ENCODE measurements at regions of chr4 and their contacts with region 1.

Region 1: GRCh38 chr4:89294573-89295269 is 12.9 kb downstream of the GPRIN3 start:
- DNase-seq: peak in 2 of 5 donors; percentile 80 to 81
- H3K4me3 ChIP-seq: peak overlapping the region; percentile 3
- H3K4me3 Mint-ChIP-seq: peak overlapping the region; percentile 73 to 87 (median 82)
- H3K27ac ChIP-seq: peak overlapping the region; percentile 43
- H3K27ac Mint-ChIP-seq: peak overlapping the region; percentile 86 to 99 (median 94)
- H3K4me1 ChIP-seq: peaks cover 89% of the 10 kb centered on the region
- H3K4me1 Mint-ChIP-seq: peaks cover 74 to 96% (median 84%) of the 10 kb centered on the region in 3 donors
- H3K27me3 ChIP-seq: no peaks in the 10 kb centered on the region
- H3K27me3 Mint-ChIP-seq: peaks cover 0 to 1% of the 10 kb centered on the region in 2 donors

Region 2: GRCh38 chr4:89254847-89255246 is 39.9 kb before region 1 on chr4:
- CTCF ChIA-PET with region 1: interaction called, 72 read pairs
- POLR2A ChIA-PET with region 1: interaction called, 5 read pairs
- DNase-seq: peak; percentile 20 to 64 (median 39)
- H3K4me3 ChIP-seq: no peak overlapping the region
- H3K4me3 Mint-ChIP-seq: peak overlapping the region in 3 of 7 donors; percentile 11 to 33 (median 18)
- H3K27ac ChIP-seq: no peak overlapping the region
- H3K27ac Mint-ChIP-seq: peak overlapping the region; percentile 81 to 97 (median 89)
- H3K4me1 ChIP-seq: peaks cover 50% of the 10 kb centered on the region
- H3K4me1 Mint-ChIP-seq: peaks cover 81 to 97% (median 94%) of the 10 kb centered on the region in 3 donors
- H3K27me3 ChIP-seq: no peaks in the 10 kb centered on the region
- H3K27me3 Mint-ChIP-seq: peaks cover 0 to 3% of the 10 kb centered on the region in 2 donors

Region 3: GRCh38 chr4:89283226-89284009 is 11.3 kb before region 1 on chr4:
- CTCF ChIA-PET with region 1: interaction called, 46 read pairs
- POLR2A ChIA-PET with region 1: interaction called, 35 read pairs
- DNase-seq: peak; percentile 52 to 88 (median 62)
- H3K4me3 ChIP-seq: peak overlapping the region; percentile 50
- H3K4me3 Mint-ChIP-seq: peak overlapping the region in 6 of 7 donors; percentile 79 to 86 (median 83)
- H3K27ac ChIP-seq: peak overlapping the region; percentile 94
- H3K27ac Mint-ChIP-seq: peak overlapping the region in 2 of 8 donors; percentile 96 to 97
- H3K4me1 ChIP-seq: peaks cover 81% of the 10 kb centered on the region
- H3K4me1 Mint-ChIP-seq: peaks cover 0 to 37% (median 32%) of the 10 kb centered on the region in 3 donors
- H3K27me3 ChIP-seq: no peaks in the 10 kb centered on the region
- H3K27me3 Mint-ChIP-seq: no peaks in the 10 kb centered on the region

Region 4: GRCh38 chr4:89307446-89308160 is 12.9 kb after region 1 on chr4 and contains the start of gene GPRIN3:
- CTCF ChIA-PET with region 1: interaction called, 19 read pairs
- POLR2A ChIA-PET with region 1: interaction called, 12 read pairs
- DNase-seq: peak; percentile 55 to 83 (median 69)
- H3K4me3 ChIP-seq: peak within 1 kb of the TSS; percentile 84
- H3K4me3 Mint-ChIP-seq: peak within 1 kb of the TSS; percentile 89 to 98 (median 96)
- H3K27ac ChIP-seq: peak within 1 kb of the TSS; percentile 80
- H3K27ac Mint-ChIP-seq: peak within 1 kb of the TSS; percentile 88 to 100 (median 97)
- H3K4me1 ChIP-seq: peaks cover 35% of the 10 kb centered on the region
- H3K4me1 Mint-ChIP-seq: peaks cover 47 to 67% (median 60%) of the 10 kb centered on the region in 3 donors
- H3K27me3 ChIP-seq: no peaks in the 10 kb centered on the region
- H3K27me3 Mint-ChIP-seq: no peaks in the 10 kb centered on the region
- total RNA-seq, gene GPRIN3: 15.6 to 16.2 TPM